Activated naive CD4-positive, alpha-beta T cell treated with anti-CD3 and anti-CD28 coated beads for 36 hours (primary cell): ENCODE measurements at regions of chr1 and their contacts with region 1.

Region 1: GRCh38 chr1:182249201-182249676 is 142.4 kb downstream of the GLUL start:
- DNase-seq: peak; percentile 83
- H3K4me3 Mint-ChIP-seq: no peak overlapping the region
- H3K27ac Mint-ChIP-seq: peak overlapping the region; percentile 75
- H3K4me1 Mint-ChIP-seq: peaks cover 24% of the 10 kb centered on the region
- H3K27me3 Mint-ChIP-seq: no peaks in the 10 kb centered on the region

Region 2: DNA sequence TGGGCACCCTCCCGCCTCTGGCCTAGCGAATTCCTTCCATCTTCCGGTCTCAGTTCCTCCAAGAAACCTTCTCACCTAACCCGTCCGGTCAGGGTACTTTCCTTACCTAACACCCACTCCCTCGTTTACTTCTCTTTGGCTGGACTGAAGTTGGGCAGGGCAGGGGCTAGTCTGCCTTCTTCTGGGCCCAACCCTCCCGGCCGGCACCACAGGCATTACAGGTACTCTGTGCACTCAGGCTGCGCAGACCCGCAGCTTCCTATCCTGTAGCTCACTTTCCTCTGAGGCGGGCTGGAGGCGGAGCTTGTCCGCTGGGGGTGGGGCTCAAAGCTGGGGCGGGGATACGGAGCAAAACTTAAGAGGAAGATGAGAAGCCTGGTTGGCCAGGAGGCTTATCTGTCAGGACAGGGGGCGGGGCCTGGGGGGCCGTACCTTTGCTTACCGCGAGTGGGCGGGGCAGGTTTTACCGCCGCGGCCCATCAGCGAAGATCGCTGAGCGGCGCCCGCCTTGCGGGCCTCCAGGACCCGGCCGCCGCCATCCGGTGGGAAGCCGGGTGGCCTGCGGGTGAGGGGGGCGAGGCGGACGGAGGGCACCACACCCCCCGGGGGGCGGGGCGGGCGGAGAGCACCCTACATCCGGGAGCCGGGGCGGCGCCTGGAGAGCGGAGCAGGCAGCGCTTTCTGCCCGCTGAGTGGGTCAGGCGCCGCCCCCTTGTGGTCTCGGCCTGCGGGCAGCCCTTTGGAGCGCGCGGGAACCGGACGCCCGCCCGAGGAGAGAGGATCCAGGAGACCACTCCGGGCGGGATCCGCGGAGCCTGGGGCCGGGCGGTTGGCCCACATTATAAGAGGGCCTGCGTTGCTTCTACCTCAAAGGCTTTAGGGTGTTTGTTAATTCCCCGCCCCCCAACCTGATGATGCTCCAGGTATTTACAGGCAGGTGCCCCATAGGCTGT is 219.6 kb before region 1 on chr1:
- CTCF ChIA-PET with region 1: no interaction called
- intact Hi-C with region 1: loop called (anchors 1 kb)
- DNase-seq: peak; percentile 99
- H3K4me3 Mint-ChIP-seq: peak overlapping the region; percentile 95
- H3K27ac Mint-ChIP-seq: peak overlapping the region; percentile 95
- H3K4me1 Mint-ChIP-seq: peaks cover 9% of the 10 kb centered on the region
- H3K27me3 Mint-ChIP-seq: no peaks in the 10 kb centered on the region

Region 3: GRCh38 chr1:182149411-182149965 is 99.8 kb before region 1 on chr1:
- CTCF ChIA-PET with region 1: no interaction called
- intact Hi-C with region 1: loop called (anchors 2 kb)
- DNase-seq: peak; percentile 60
- H3K4me3 Mint-ChIP-seq: no peak overlapping the region
- H3K27ac Mint-ChIP-seq: peak overlapping the region; percentile 25
- H3K4me1 Mint-ChIP-seq: peaks cover 26% of the 10 kb centered on the region
- H3K27me3 Mint-ChIP-seq: no peaks in the 10 kb centered on the region

Region 4: GRCh38 chr1:182259229-182259872 is 10.1 kb after region 1 on chr1:
- CTCF ChIA-PET with region 1: interaction called, 4 read pairs
- intact Hi-C with region 1: loop called (anchors 1 kb)
- DNase-seq: peak; percentile 76
- H3K4me3 Mint-ChIP-seq: no peak overlapping the region
- H3K27ac Mint-ChIP-seq: peak overlapping the region; percentile 73
- H3K4me1 Mint-ChIP-seq: peaks cover 28% of the 10 kb centered on the region
- H3K27me3 Mint-ChIP-seq: no peaks in the 10 kb centered on the region

Region 5: DNA sequence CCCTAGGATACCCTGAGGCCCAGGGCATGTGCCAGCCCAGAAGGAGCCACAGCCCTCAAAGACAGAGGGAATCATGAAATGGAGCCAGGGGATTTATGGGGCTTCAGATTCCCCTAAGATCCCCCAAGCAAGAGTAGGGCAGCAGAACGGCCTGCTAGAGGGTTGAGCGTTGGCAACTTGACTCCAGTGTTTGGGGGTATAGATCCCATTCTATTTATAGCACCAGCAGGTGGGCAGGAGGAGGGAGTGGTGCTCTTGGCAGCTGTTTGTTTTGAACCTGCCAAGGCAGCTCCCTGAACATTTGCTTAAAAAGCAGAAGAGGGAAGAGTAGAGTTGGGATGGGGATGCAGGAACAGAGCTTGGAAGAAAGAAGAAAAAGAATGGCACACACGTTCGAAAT is 108.7 kb after region 1 on chr1:
- CTCF ChIA-PET with region 1: no interaction called
- intact Hi-C with region 1: no loop called
- DNase-seq: no peak
- H3K4me3 Mint-ChIP-seq: no peak overlapping the region
- H3K27ac Mint-ChIP-seq: no peak overlapping the region
- H3K4me1 Mint-ChIP-seq: no peaks in the 10 kb centered on the region
- H3K27me3 Mint-ChIP-seq: no peaks in the 10 kb centered on the region

Region 6: DNA sequence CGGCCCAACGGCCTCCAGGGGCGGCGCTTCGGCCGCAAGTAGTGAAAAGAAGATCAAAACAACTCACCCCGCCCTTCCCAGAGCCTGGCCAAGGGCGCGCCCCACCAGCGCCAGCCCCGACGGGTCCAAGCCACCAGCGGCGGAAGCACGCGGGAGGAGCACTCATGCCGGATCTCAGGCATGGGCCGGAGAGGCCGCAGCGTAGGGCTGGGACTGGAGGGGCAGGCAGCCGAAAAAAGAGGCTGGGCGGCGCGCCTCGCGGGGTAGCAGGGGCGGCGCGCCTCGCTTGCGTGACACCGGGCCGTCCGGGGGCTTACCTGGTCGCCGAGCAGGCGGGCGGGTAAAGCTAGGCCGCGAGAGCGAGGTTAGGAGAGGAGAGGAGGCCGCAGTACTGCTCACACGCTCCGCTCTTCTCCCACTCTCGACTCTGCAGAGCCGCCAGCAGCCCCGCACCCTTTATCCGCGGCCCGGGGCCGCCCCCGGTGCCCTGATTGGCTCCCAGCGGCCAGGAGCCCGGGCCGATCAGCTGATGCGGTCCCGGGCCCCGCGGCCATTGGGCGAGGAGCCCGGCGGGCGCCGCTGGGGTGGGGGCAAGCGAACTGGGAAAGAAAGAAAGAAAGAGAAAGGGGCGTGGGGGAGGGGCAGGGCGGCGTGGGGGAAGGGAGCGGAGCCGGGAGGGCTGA is 142.3 kb after region 1 on chr1 and contains the start of gene GLUL:
- CTCF ChIA-PET with region 1: no interaction called
- intact Hi-C with region 1: loop called (anchors 1 kb)
- DNase-seq: peak; percentile 76
- H3K4me3 Mint-ChIP-seq: peak within 1 kb of the TSS; percentile 87
- H3K27ac Mint-ChIP-seq: peak within 1 kb of the TSS; percentile 72
- H3K4me1 Mint-ChIP-seq: peaks cover 18% of the 10 kb centered on the region
- H3K27me3 Mint-ChIP-seq: no peaks in the 10 kb centered on the region
- total RNA-seq, gene GLUL: 71.5 to 73.1 TPM